Caco-2 (cell line): ENCODE measurements at regions of chr7 and their contacts with region 1.

Region 1: GRCh38 chr7:8295638-8296361 is 33.8 kb upstream of the ICA1 start:
- DNase-seq: peak; percentile 63 to 76
- H3K4me3 ChIP-seq: no peak overlapping the region
- H3K4me3 Mint-ChIP-seq: no peak overlapping the region
- H3K27ac Mint-ChIP-seq: no peak overlapping the region
- H3K4me1 ChIP-seq: peaks cover 11% of the 10 kb centered on the region
- H3K4me1 Mint-ChIP-seq: peaks cover 26% of the 10 kb centered on the region
- H3K27me3 ChIP-seq: no peaks in the 10 kb centered on the region
- H3K27me3 Mint-ChIP-seq: no peaks in the 10 kb centered on the region
- CTCF ChIP-seq: peak; percentile 74

Region 2: DNA sequence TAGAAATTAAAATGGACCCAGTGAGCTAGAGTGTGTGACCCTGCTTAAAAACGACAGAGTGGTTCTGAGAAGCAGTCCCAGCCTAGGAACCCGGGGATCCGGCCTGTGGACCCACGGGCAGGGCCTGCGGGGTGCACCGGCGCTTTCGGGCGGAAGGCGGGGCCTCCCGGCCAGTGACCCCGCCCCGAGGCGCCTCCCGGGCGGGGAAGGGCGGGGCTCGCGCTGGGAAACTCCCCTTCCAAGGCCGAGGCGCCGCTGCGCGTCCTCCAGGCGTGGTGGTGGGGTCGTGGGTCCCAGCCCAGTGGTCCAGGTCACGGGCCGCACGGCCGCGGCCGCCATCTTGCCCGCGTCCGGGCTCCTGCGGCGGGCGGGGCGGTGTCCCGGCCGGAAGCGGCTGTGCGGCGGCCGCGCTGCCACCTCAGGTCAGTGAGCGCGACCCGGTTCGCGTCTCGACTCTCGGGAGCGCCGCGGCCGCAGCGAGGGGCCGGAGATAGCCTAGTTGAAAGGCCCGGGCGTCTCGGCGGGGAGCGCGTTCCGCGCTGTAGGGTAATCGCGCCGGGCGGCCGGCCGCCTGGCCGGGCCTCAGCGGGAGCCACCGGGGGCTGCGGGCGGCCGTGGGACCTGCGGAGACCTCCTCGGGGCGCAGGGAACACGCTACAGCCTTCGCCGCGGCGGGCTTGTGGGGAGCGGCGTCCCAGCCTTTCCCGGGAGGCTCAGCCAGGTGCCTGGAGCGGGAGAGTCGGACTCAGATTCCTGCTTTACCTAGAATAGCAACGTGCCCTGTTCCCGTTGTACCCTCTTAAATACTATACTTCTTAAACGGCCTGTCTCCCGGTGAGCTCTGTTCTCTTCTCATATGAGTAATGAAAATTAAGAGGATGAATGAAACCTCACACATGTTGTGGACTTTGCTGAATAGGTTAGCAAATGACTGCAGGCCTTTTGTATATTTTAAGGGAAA is 728.9 kb before region 1 on chr7 and contains the start of gene MIOS:
- CTCF ChIA-PET with region 1: no interaction called
- POLR2A ChIA-PET with region 1: no interaction called
- intact Hi-C with region 1: loop called (anchors 10 kb)
- DNase-seq: peak; percentile 95 to 97
- H3K4me3 ChIP-seq: peak within 1 kb of the TSS; percentile 53
- H3K4me3 Mint-ChIP-seq: no peak within 1 kb of the TSS
- H3K27ac Mint-ChIP-seq: no peak within 1 kb of the TSS
- H3K4me1 ChIP-seq: peaks cover 34% of the 10 kb centered on the region
- H3K4me1 Mint-ChIP-seq: peaks cover 20% of the 10 kb centered on the region
- H3K27me3 ChIP-seq: no peaks in the 10 kb centered on the region
- H3K27me3 Mint-ChIP-seq: no peaks in the 10 kb centered on the region
- CTCF ChIP-seq: no peak
- total RNA-seq, gene MIOS: 32.1 and 37.3 TPM in 2 replicates

Region 3: DNA sequence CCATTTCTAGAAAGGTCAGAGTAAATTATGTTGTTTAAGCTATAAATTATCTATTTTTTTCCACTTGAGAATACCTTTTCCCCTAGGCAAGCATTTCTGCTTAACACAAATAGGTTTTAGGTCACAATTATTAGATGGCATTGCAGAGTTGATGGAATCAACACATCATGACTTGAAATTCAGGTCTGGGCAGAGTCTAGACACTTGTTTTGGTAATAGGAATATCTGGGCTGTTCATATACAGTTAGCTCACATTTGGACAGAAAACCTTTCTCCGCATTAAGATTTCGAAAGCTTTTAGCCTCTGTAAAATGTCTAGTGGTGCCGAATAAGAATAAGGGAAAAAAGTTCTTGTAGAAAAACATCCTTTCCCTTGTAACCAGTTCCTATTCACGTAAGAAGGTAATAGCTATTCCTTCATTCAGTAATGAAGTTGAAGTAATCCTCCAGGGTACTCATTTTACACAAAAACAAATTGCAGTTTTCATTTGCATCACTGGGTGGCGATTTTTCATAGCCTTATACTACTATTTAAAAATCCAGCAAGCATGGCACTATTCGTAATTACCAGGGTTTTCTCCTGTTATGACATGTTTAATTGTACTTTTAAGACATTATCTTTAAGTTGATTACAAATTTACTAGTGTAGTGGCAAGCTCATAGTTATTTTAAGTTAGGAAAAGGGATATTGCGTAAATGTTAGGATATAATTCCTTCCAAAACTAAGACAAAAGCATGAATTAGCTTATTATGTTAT is 614.4 kb before region 1 on chr7:
- CTCF ChIA-PET with region 1: interaction called, 10 read pairs
- POLR2A ChIA-PET with region 1: no interaction called
- intact Hi-C with region 1: loop called (anchors 1 kb)
- DNase-seq: peak in 1 of 2 experiments; percentile 55
- H3K4me3 ChIP-seq: no peak overlapping the region
- H3K4me3 Mint-ChIP-seq: no peak overlapping the region
- H3K27ac Mint-ChIP-seq: no peak overlapping the region
- H3K4me1 ChIP-seq: no peaks in the 10 kb centered on the region
- H3K4me1 Mint-ChIP-seq: no peaks in the 10 kb centered on the region
- H3K27me3 ChIP-seq: no peaks in the 10 kb centered on the region
- H3K27me3 Mint-ChIP-seq: no peaks in the 10 kb centered on the region
- CTCF ChIP-seq: peak; percentile 50 to 62

Region 4: DNA sequence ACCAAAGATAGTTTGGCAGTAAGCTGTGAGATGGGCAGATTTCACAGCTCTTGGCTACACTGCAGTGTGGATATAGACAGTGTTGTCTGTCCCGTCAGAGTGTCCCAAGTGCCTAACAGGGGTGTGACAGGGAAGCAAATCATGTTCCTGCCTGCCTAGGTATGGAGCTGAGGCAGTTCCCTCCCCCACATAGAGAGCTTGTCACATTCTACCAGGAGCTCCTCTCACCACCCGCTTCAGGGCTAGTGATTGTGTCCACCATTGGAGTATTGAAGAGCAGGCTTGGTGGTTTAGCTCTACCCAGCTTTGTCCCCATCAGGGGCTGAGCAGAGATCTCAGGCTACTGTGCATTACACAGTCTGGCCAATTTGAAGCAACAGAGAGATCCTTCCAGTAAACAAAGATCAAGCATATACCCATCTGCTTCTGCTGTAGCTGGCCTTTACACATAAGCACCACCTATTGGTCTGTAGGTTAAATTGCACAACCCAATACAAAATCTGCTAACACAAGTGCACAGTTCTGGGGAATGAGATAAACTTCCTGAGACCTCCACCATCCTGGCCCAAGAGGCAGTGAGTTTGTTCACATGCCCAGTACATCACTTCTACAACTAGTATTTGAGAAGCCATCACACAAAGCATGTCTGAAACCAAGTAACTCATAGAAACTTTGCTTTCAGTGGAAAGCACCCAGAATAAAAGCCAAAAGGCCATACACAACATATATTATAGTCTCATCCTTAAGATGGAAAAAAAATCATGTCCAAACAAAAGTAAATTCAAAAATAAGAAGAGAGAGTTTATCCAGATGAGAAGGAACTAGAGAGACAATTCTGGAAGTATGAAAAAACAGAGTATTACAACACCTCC is 259.9 kb before region 1 on chr7:
- CTCF ChIA-PET with region 1: interaction called, 5 read pairs
- POLR2A ChIA-PET with region 1: no interaction called
- intact Hi-C with region 1: loop called (anchors 2 kb)
- DNase-seq: peak in 1 of 2 experiments; percentile 21
- H3K4me3 ChIP-seq: no peak overlapping the region
- H3K4me3 Mint-ChIP-seq: no peak overlapping the region
- H3K27ac Mint-ChIP-seq: no peak overlapping the region
- H3K4me1 ChIP-seq: no peaks in the 10 kb centered on the region
- H3K4me1 Mint-ChIP-seq: no peaks in the 10 kb centered on the region
- H3K27me3 ChIP-seq: no peaks in the 10 kb centered on the region
- H3K27me3 Mint-ChIP-seq: no peaks in the 10 kb centered on the region
- CTCF ChIP-seq: peak; percentile 23 to 76

Region 5: DNA sequence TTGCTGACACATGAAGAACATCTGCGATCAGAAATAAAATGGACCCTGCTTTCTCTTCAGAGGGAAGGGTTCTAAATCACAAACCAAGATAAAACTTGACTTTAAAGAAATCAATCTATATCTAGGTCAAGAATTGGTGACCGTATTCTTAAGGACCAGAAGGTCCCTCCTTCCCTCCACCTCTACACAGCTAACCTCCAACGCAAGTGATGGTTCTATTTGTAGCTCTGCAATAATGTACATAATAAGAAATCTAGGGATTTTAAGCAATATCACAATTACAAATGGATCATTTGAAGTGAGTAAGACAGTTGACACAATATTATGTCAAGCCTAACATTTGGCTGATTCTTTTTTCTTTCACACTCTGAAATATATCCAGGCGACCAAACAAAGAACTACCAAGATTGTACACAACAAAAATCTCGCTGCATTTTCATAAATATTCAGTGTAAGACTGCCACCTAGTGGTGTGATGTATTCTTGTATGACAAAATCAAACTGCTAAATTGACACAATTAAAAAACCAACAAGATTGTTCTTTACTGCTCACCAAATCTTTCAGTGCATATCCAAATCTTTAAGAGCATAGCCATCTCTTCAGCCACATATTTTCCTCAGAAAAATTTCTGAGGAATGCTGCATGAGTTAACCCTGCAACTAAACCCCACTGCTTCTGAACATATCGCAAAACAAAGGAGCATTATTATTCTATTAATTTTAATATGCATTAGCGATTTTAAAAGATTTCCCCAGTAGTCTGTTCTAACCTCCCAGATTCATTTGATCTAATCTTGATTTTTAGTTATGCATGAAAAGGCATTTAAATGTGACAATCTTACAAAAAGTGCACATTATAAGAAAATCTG is 78.4 kb before region 1 on chr7:
- CTCF ChIA-PET with region 1: interaction called, 5 read pairs
- POLR2A ChIA-PET with region 1: no interaction called
- intact Hi-C with region 1: loop called (anchors 1 kb)
- DNase-seq: peak in 1 of 2 experiments; percentile 59
- H3K4me3 ChIP-seq: no peak overlapping the region
- H3K4me3 Mint-ChIP-seq: no peak overlapping the region
- H3K27ac Mint-ChIP-seq: no peak overlapping the region
- H3K4me1 ChIP-seq: no peaks in the 10 kb centered on the region
- H3K4me1 Mint-ChIP-seq: peaks cover 4% of the 10 kb centered on the region
- H3K27me3 ChIP-seq: no peaks in the 10 kb centered on the region
- H3K27me3 Mint-ChIP-seq: no peaks in the 10 kb centered on the region
- CTCF ChIP-seq: peak; percentile 52 to 75

Region 6: GRCh38 chr7:8277394-8277982 is 18.3 kb before region 1 on chr7:
- CTCF ChIA-PET with region 1: interaction called, 36 read pairs
- POLR2A ChIA-PET with region 1: no interaction called
- intact Hi-C with region 1: loop called (anchors 1 kb)
- DNase-seq: peak in 1 of 2 experiments; percentile 30
- H3K4me3 ChIP-seq: no peak overlapping the region
- H3K4me3 Mint-ChIP-seq: no peak overlapping the region
- H3K27ac Mint-ChIP-seq: no peak overlapping the region
- H3K4me1 ChIP-seq: no peaks in the 10 kb centered on the region
- H3K4me1 Mint-ChIP-seq: peaks cover 1% of the 10 kb centered on the region
- H3K27me3 ChIP-seq: no peaks in the 10 kb centered on the region
- H3K27me3 Mint-ChIP-seq: no peaks in the 10 kb centered on the region
- CTCF ChIP-seq: peak; percentile 38 to 44

Region 7: GRCh38 chr7:8531991-8532515 is 236.3 kb after region 1 on chr7:
- CTCF ChIA-PET with region 1: no interaction called
- POLR2A ChIA-PET with region 1: no interaction called
- intact Hi-C with region 1: no loop called
- DNase-seq: no peak
- H3K4me3 ChIP-seq: no peak overlapping the region
- H3K4me3 Mint-ChIP-seq: no peak overlapping the region
- H3K27ac Mint-ChIP-seq: no peak overlapping the region
- H3K4me1 ChIP-seq: no peaks in the 10 kb centered on the region
- H3K4me1 Mint-ChIP-seq: no peaks in the 10 kb centered on the region
- H3K27me3 ChIP-seq: no peaks in the 10 kb centered on the region
- H3K27me3 Mint-ChIP-seq: no peaks in the 10 kb centered on the region
- CTCF ChIP-seq: no peak